Breast epithelium (tissue), 4 donors: ENCODE measurements at regions of chr11 and their contacts with region 1.

Region 1: GRCh38 chr11:101428918-101429317 is 154.9 kb downstream of the TRPC6 start:
- DNase-seq: no peak
- H3K4me3 ChIP-seq: no peak overlapping the region
- H3K27ac ChIP-seq: no peak overlapping the region
- H3K4me1 ChIP-seq: no peaks in the 10 kb centered on the region
- H3K27me3 ChIP-seq: no peaks in the 10 kb centered on the region
- CTCF ChIP-seq: no peak
- POLR2A ChIP-seq: no peak

Region 2: GRCh38 chr11:100557830-100558611 is 870.9 kb before region 1 on chr11:
- intact Hi-C with region 1: loop called (anchors 5 kb)
- DNase-seq: no peak
- H3K4me3 ChIP-seq: no peak overlapping the region
- H3K27ac ChIP-seq: no peak overlapping the region
- H3K4me1 ChIP-seq: peaks cover 0 to 5% of the 10 kb centered on the region in 2 donors
- H3K27me3 ChIP-seq: no peaks in the 10 kb centered on the region
- CTCF ChIP-seq: no peak
- POLR2A ChIP-seq: no peak